Ascending aorta (tissue), 2 donors: ENCODE measurements at regions of chr14 and their contacts with region 1.

Region 1: DNA sequence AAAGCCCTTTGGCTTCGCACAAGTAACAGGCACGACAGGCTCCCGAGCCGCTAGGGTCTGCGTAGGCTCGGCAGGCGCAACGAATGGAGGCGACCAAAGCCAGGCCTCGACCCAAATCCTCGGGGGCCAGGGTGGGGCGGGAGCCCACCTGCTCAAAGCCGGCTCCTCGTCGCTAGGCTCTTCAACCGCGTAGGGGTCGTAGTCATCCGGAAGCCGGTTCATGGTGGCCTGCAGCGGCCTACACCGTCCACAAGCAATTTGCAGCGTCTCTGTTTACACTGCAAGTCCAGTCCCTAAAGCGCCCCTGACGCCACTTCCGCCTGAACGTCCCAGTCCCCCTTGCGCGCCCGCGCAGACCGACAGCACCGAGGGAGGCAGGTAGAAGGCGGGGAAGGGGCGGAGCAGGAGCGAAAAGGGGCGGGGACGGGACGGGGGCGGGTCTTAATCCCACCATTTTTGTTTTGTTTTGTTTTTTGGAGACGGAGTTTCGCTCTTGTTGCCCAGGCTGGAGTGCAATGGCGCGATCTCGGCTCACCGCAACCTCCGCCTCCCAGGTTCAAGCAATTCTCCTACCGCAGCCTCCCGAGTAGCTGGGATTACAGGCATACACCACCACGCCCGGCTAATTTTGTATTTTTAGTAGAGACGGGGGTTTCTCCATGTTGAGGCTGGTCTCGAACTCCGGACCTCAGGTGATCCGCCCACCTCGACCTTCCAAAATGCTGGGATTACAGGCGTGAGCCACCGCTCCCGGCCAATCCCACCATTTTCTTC is at the start of gene EAPP:
- DNase-seq: peak; percentile 96 to 99
- H3K4me3 ChIP-seq: peak within 1 kb of the TSS; percentile 75 to 86
- H3K27ac ChIP-seq: peak within 1 kb of the TSS; percentile 92
- H3K4me1 ChIP-seq: peaks cover 2 to 3% of the 10 kb centered on the region in 2 donors
- H3K27me3 ChIP-seq: no peaks in the 10 kb centered on the region
- CTCF ChIP-seq: no peak
- total RNA-seq, gene EAPP: 10.1 TPM

Region 2: DNA sequence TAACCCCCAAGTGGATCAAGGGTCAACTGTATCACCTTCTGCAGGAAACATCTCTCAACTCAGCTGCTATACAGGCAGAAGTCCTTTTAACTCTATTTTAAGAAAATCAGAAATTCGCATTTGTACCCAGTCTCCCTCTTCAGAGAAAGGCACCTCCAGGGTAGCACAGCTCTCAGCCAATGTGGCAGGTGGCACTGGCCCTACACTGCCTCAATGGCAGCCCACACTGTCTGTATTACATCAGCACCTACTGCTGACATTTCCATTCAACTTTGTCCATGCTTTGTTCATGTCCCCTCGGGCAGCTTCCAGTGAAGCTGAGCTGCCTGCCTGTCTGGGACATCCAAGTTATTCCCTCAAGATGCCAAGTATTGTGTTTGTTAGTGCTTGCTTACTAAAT is 86.4 kb before region 1 on chr14:
- intact Hi-C with region 1: no loop called
- DNase-seq: no peak
- H3K4me3 ChIP-seq: no peak overlapping the region
- H3K27ac ChIP-seq: no peak overlapping the region
- H3K4me1 ChIP-seq: no peaks in the 10 kb centered on the region
- H3K27me3 ChIP-seq: no peaks in the 10 kb centered on the region
- CTCF ChIP-seq: no peak

Region 3: GRCh38 chr14:34569750-34570149 is 30.2 kb after region 1 on chr14:
- intact Hi-C with region 1: no loop called
- DNase-seq: no peak
- H3K4me3 ChIP-seq: no peak overlapping the region
- H3K27ac ChIP-seq: no peak overlapping the region
- H3K4me1 ChIP-seq: no peaks in the 10 kb centered on the region
- H3K27me3 ChIP-seq: no peaks in the 10 kb centered on the region
- CTCF ChIP-seq: no peak

Region 4: GRCh38 chr14:34629657-34630529 is 90.3 kb after region 1 on chr14 and contains the start of gene SNX6:
- intact Hi-C with region 1: loop called (anchors 5 kb)
- DNase-seq: peak; percentile 46 to 92
- H3K4me3 ChIP-seq: peak within 1 kb of the TSS; percentile 85 to 96
- H3K27ac ChIP-seq: peak within 1 kb of the TSS; percentile 87 to 94
- H3K4me1 ChIP-seq: peaks cover 5 to 6% of the 10 kb centered on the region in 2 donors
- H3K27me3 ChIP-seq: no peaks in the 10 kb centered on the region
- CTCF ChIP-seq: no peak
- total RNA-seq, gene SNX6: 25.3 TPM

Region 5: DNA sequence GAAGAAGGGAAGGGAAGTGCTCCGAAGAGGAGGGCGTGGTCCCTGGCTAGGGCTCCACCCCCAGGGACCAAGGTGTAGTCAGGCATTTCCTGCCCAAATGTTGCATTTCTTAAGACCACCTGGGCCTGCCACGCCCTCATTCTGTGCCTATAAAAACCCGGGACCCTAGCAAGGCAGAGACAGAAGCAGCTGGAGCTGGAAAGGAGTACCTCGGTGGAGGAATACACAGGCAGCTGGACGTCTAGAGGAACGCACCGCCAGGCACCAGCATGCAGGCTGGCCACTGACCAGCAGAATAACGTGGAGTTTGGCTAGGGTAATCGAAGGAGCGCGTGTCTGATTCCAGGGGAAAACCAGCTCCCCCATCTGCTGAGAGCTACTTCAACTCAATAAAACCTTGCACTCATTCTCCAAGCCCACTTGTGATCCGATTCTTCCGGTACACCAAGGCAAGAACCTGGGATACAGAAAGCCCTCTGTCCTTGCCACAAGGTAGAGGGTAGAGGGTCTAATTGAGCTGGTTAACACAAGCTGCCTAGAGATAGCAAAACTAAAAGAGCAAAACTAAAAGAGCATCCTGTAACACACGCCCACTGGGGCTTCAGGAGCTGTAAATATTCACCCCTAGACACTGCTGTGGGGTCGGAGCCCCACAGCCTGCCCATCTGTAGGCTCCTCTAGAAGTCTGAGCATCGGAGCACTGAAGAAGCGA is 153.8 kb after region 1 on chr14:
- intact Hi-C with region 1: no loop called
- DNase-seq: no peak
- H3K4me3 ChIP-seq: peak overlapping the region; percentile 34 to 57
- H3K27ac ChIP-seq: no peak overlapping the region
- H3K4me1 ChIP-seq: peaks cover 0 to 3% of the 10 kb centered on the region in 2 donors
- H3K27me3 ChIP-seq: no peaks in the 10 kb centered on the region
- CTCF ChIP-seq: no peak